IMR-90 (cell line): ENCODE measurements at regions of chr5 and their contacts with region 1.

Region 1: GRCh38 chr5:91635950-91636734 is 253.0 kb upstream of the ARRDC3 start:
- DNase-seq: no peak
- ATAC-seq: no peak
- H3K4me3 ChIP-seq: no peak overlapping the region
- H3K27ac ChIP-seq: no peak overlapping the region
- H3K4me1 ChIP-seq: no peaks in the 10 kb centered on the region
- H3K27me3 ChIP-seq: no peaks in the 10 kb centered on the region
- CTCF ChIP-seq: no peak
- POLR2A ChIP-seq: no peak
- RAD21 ChIP-seq: no peak

Region 2: DNA sequence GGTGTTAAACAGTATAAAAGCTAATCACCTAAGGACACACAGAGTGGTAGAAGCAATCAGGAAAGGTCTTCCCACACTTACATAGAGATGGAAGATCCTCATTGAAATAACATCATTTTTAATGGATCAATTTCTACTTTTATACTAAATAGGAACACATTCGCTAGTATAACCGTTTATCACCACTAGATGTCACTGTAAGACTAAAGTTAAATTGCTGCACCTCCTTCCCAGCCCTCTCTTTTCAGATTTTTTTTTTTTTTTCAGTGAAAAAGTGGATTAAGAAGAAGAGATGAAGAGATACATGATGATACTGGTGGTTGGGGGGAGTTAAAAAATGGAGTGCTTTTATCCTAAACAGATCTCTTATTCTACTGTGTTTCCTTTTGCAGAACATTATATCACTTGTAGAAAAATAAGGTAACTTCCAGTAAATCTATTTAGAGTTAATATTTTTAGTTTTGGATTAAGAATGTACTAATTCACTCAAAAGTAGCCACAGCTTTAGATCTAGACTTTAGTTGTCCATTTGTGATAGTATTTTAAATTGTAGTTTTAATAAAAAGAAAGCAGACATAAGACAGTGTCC is 136.1 kb before region 1 on chr5:
- CTCF ChIA-PET with region 1: no interaction called
- POLR2A ChIA-PET with region 1: no interaction called
- dilution Hi-C with region 1: no loop called
- in situ Hi-C with region 1: no loop called
- intact Hi-C with region 1: loop called (anchors 5 kb)
- DNase-seq: peak; percentile 54
- ATAC-seq: peak; percentile 77
- H3K4me3 ChIP-seq: no peak overlapping the region
- H3K27ac ChIP-seq: no peak overlapping the region
- H3K4me1 ChIP-seq: no peaks in the 10 kb centered on the region
- H3K27me3 ChIP-seq: no peaks in the 10 kb centered on the region
- CTCF ChIP-seq: peak; percentile 69
- POLR2A ChIP-seq: no peak
- RAD21 ChIP-seq: peak; percentile 67

Region 3: DNA sequence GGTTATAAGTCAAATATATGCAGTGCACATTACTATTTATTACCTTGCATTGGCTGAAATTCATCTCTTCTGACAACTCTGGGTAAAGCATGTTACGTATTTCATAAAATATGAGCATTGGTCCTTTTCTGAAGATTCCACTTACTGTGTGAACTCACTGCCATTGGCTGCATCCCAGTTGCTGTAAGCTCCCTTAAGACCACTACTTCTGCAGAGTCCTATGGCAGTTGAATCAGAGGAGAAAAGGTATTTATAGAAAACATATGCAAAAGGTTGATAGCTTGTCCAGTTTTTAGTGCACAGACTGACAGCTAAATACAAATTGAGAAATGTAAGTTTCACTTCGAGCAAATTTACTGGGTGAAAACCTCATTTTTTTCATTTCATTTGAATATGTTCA is 141.5 kb after region 1 on chr5:
- CTCF ChIA-PET with region 1: no interaction called
- POLR2A ChIA-PET with region 1: no interaction called
- dilution Hi-C with region 1: no loop called
- in situ Hi-C with region 1: no loop called
- intact Hi-C with region 1: no loop called
- DNase-seq: no peak
- ATAC-seq: no peak
- H3K4me3 ChIP-seq: no peak overlapping the region
- H3K27ac ChIP-seq: no peak overlapping the region
- H3K4me1 ChIP-seq: no peaks in the 10 kb centered on the region
- H3K27me3 ChIP-seq: no peaks in the 10 kb centered on the region
- CTCF ChIP-seq: no peak
- POLR2A ChIP-seq: no peak
- RAD21 ChIP-seq: no peak